ENCODE measurements at regions of chr2 and their contacts with region 1.

Region 1: GRCh38 chr2:70124983-70125480 is 37.8 kb downstream of the PCBP1 start:
- DNase-seq: peak; percentile 72
- ATAC-seq: peak; percentile 64 to 66

Region 2: GRCh38 chr2:70086838-70087701 is 38.0 kb before region 1 on chr2 and contains the start of gene PCBP1:
- intact Hi-C with region 1: loop called in 1 of 2 experiments (anchors 5 kb)
- DNase-seq: peak; percentile 97
- ATAC-seq: peak; percentile 86 to 91
- total RNA-seq, gene PCBP1: 230 to 248 TPM

Region 3: GRCh38 chr2:70142590-70143313 is 17.7 kb after region 1 on chr2:
- intact Hi-C with region 1: loop called in 1 of 2 experiments (anchors 1 kb)
- DNase-seq: peak; percentile 100
- ATAC-seq: peak; percentile 88 to 92